ENCODE measurements at regions of chr4 and their contacts with region 1.

Region 1: GRCh38 chr4:76279472-76279871 is 27.1 kb upstream of the STBD1 start:
- DNase-seq: peak in 6 of 14 experiments; percentile 11 to 59 (median 18)
- ATAC-seq: no peak
- H3K4me3 ChIP-seq: no peak overlapping the region
- H3K4me3 Mint-ChIP-seq: no peak overlapping the region
- H3K27ac ChIP-seq: no peak overlapping the region
- H3K27ac Mint-ChIP-seq: no peak overlapping the region
- H3K4me1 ChIP-seq: no peaks in the 10 kb centered on the region
- H3K4me1 Mint-ChIP-seq: no peaks in the 10 kb centered on the region
- H3K27me3 ChIP-seq: peaks cover 0 to 5% of the 10 kb centered on the region in 2 experiments
- H3K27me3 Mint-ChIP-seq: no peaks in the 10 kb centered on the region
- CTCF ChIP-seq: peak; percentile 12

Region 2: GRCh38 chr4:76354517-76355473 is 75.3 kb after region 1 on chr4:
- CTCF ChIA-PET with region 1: no interaction called
- POLR2A ChIA-PET with region 1: no interaction called
- intact Hi-C with region 1: no loop called
- DNase-seq: peak in 6 of 14 experiments; percentile 5 to 73 (median 30)
- ATAC-seq: no peak
- H3K4me3 ChIP-seq: no peak overlapping the region
- H3K4me3 Mint-ChIP-seq: peak overlapping the region; percentile 21
- H3K27ac ChIP-seq: no peak overlapping the region
- H3K27ac Mint-ChIP-seq: peak overlapping the region; percentile 16
- H3K4me1 ChIP-seq: no peaks in the 10 kb centered on the region
- H3K4me1 Mint-ChIP-seq: peaks cover 16% of the 10 kb centered on the region
- H3K27me3 ChIP-seq: no peaks in the 10 kb centered on the region
- H3K27me3 Mint-ChIP-seq: peaks cover 8% of the 10 kb centered on the region
- CTCF ChIP-seq: no peak

Region 3: GRCh38 chr4:76377911-76378310 is 98.4 kb after region 1 on chr4:
- CTCF ChIA-PET with region 1: no interaction called
- POLR2A ChIA-PET with region 1: no interaction called
- intact Hi-C with region 1: loop called in 1 of 2 experiments (anchors 2 kb)
- DNase-seq: peak; percentile 6 to 64 (median 30)
- ATAC-seq: no peak
- H3K4me3 ChIP-seq: no peak overlapping the region
- H3K4me3 Mint-ChIP-seq: no peak overlapping the region
- H3K27ac ChIP-seq: no peak overlapping the region
- H3K27ac Mint-ChIP-seq: no peak overlapping the region
- H3K4me1 ChIP-seq: no peaks in the 10 kb centered on the region
- H3K4me1 Mint-ChIP-seq: no peaks in the 10 kb centered on the region
- H3K27me3 ChIP-seq: no peaks in the 10 kb centered on the region
- H3K27me3 Mint-ChIP-seq: no peaks in the 10 kb centered on the region
- CTCF ChIP-seq: no peak